T-cell (primary cell): ENCODE measurements at regions of chr9 and their contacts with region 1.

Region 1: GRCh38 chr9:33374634-33375213 is 27.6 kb downstream of the AQP7 start:
- DNase-seq: peak; percentile 35 to 79 (median 62)
- ATAC-seq: peak; percentile 81 to 94 (median 88)
- H3K4me3 ChIP-seq: peak overlapping the region in 1 of 2 donors; percentile 2
- H3K4me3 Mint-ChIP-seq: peak overlapping the region; percentile 25 to 43 (median 32)
- H3K27ac ChIP-seq: no peak overlapping the region
- H3K27ac Mint-ChIP-seq: peak overlapping the region; percentile 64 to 72
- H3K4me1 ChIP-seq: peaks cover 0 to 9% of the 10 kb centered on the region in 2 experiments
- H3K4me1 Mint-ChIP-seq: peaks cover 10 to 14% (median 11%) of the 10 kb centered on the region in 3 donors
- H3K27me3 ChIP-seq: no peaks in the 10 kb centered on the region
- H3K27me3 Mint-ChIP-seq: no peaks in the 10 kb centered on the region

Region 2: DNA sequence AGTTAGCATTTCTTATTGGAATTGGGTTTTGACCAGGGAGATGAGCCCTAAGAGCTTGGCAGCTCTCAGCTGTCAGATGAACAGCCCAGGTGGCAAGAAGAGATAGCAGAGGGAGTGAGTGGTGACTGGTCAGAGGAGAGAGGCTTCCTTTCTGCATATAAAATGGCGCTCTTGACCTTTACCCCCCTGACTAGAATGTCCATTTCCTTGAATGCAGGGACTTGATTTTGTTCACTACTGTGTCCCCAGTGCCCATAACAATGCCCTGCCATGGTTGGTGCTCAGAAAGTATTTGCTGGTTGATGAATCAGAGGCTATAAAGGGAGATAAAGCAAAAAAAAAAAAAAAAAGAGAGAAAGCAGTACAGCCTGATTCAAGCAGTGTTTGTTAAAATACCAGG is 102.7 kb before region 1 on chr9:
- CTCF ChIA-PET with region 1: no interaction called
- POLR2A ChIA-PET with region 1: no interaction called
- DNase-seq: no peak
- ATAC-seq: no peak
- H3K4me3 ChIP-seq: no peak overlapping the region
- H3K4me3 Mint-ChIP-seq: no peak overlapping the region
- H3K27ac ChIP-seq: no peak overlapping the region
- H3K27ac Mint-ChIP-seq: no peak overlapping the region
- H3K4me1 ChIP-seq: no peaks in the 10 kb centered on the region
- H3K4me1 Mint-ChIP-seq: peaks cover 20 to 24% (median 22%) of the 10 kb centered on the region in 3 donors
- H3K27me3 ChIP-seq: no peaks in the 10 kb centered on the region
- H3K27me3 Mint-ChIP-seq: no peaks in the 10 kb centered on the region

Region 3: DNA sequence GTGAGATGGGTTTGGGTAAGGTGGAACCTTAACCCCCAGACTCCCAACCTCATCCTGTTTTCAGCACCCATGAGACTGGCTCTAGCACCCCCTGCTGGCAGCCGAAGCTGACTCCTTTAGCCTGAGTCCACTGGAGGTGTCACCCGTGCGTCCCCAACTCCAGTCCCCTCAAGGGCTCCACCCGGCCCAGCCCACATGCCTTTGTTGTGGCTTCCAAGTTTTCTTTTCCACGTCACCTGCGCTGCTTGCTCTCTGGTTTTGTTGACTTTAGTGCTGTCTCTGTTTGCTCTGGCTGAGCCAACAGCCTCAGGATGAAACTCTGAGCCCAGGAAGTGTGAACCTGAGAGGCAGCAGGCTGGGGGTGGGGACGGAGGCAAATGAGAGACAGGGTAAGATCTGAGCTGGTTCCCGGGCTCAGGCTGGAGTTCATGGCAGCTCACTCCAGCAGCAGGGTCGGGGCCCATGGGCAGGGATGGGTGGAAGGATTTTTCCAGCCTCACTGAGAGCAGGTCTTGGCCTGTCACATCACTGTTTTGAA is 40.8 kb after region 1 on chr9:
- CTCF ChIA-PET with region 1: interaction called, 9 to 12 read pairs
- POLR2A ChIA-PET with region 1: no interaction called
- DNase-seq: peak; percentile 84 to 98 (median 95)
- ATAC-seq: peak; percentile 83 to 94 (median 85)
- H3K4me3 ChIP-seq: peak overlapping the region; percentile 10 to 35
- H3K4me3 Mint-ChIP-seq: peak overlapping the region; percentile 63 to 70 (median 70)
- H3K27ac ChIP-seq: peak overlapping the region; percentile 83
- H3K27ac Mint-ChIP-seq: peak overlapping the region; percentile 99 to 100
- H3K4me1 ChIP-seq: peaks cover 30 to 55% of the 10 kb centered on the region in 2 experiments
- H3K4me1 Mint-ChIP-seq: peaks cover 54 to 59% (median 55%) of the 10 kb centered on the region in 3 donors
- H3K27me3 ChIP-seq: no peaks in the 10 kb centered on the region
- H3K27me3 Mint-ChIP-seq: no peaks in the 10 kb centered on the region

Region 4: GRCh38 chr9:33446946-33447798 is 72.4 kb after region 1 on chr9 and contains the start of gene AQP3:
- CTCF ChIA-PET with region 1: interaction called, 3 to 15 read pairs
- POLR2A ChIA-PET with region 1: no interaction called
- DNase-seq: peak; percentile 36 to 85 (median 68)
- ATAC-seq: peak; percentile 67 to 74 (median 73)
- H3K4me3 ChIP-seq: peak within 1 kb of the TSS; percentile 77 to 83
- H3K4me3 Mint-ChIP-seq: peak within 1 kb of the TSS; percentile 94 to 98 (median 94)
- H3K27ac ChIP-seq: peak within 1 kb of the TSS; percentile 71
- H3K27ac Mint-ChIP-seq: peak within 1 kb of the TSS; percentile 95 to 98
- H3K4me1 ChIP-seq: peaks cover 19 to 67% of the 10 kb centered on the region in 2 experiments
- H3K4me1 Mint-ChIP-seq: peaks cover 50 to 64% (median 64%) of the 10 kb centered on the region in 3 donors
- H3K27me3 ChIP-seq: no peaks in the 10 kb centered on the region
- H3K27me3 Mint-ChIP-seq: no peaks in the 10 kb centered on the region
- total RNA-seq, gene AQP3: 85.7 to 130 (median 111) TPM